ENCODE measurements at regions of chr1 and their contacts with region 1.

Region 1: DNA sequence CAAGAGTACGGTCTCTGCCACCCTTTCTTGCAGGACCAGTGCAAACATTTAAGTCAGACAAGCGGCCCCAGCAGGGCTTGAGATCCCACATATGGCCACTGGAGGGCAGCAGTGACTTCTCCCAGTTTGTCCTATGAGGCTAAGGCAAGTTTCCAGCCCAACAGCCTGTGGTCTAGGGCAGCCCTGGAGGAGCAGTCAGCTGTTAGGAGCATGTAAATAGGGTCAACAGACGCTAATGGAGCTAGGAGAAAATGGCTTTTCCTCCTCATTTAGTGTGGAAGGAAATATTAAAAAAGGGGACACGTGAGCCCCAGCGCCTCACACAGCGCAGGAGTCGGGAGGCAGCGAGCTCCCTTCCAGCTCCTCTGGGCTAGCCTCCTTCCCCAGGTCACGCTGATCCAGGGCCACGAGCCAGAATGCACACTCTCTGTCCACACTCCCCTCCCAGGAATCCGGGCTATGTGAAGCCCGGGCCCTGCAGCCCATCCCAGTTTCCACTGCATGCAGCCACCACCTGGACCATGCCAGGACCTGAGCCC is 95.6 kb downstream of the LAMC2 start:
- DNase-seq: peak; percentile 80 to 93 (median 88)
- H3K4me3 ChIP-seq: peak overlapping the region in 17 of 59 donors; percentile 4 to 41 (median 23)
- H3K27ac ChIP-seq: peak overlapping the region in 13 of 59 donors; percentile 1 to 70 (median 46)
- H3K27me3 ChIP-seq: no peaks in the 10 kb centered on the region
- CTCF ChIP-seq: peak; percentile 75 to 97 (median 92)

Region 2: GRCh38 chr1:182974506-182975191 is 307.0 kb before region 1 on chr1:
- intact Hi-C with region 1: no loop called
- DNase-seq: no peak
- H3K4me3 ChIP-seq: no peak overlapping the region
- H3K27ac ChIP-seq: no peak overlapping the region
- H3K27me3 ChIP-seq: no peaks in the 10 kb centered on the region
- CTCF ChIP-seq: no peak

Region 3: DNA sequence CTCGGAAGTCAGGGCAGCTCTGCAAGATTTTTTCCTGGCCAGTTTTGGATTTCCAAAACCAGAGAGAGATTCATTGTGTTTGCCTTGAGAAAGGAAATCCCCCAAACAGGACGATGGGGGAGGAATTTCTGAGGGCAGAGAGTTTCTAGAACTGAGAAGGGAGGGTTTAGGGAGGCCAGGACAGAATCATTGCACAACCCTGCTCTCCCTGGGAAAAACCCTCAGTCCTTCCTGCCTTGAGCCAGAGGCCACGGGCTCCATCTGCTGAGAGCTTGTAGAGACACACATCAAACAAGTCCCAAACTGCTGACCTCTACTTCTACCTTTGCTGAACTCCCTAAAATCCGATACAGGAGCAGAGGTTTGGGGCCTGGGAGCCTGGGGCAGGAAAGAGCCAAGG is 36.8 kb after region 1 on chr1:
- intact Hi-C with region 1: loop called in 1 of 2 experiments (anchors 2 kb)
- DNase-seq: peak in 1 of 10 donors; percentile 49
- H3K4me3 ChIP-seq: no peak overlapping the region
- H3K27ac ChIP-seq: peak overlapping the region in 10 of 59 donors; percentile 8 to 69 (median 39)
- H3K27me3 ChIP-seq: no peaks in the 10 kb centered on the region
- CTCF ChIP-seq: peak in 30 of 56 donors; percentile 14 to 54 (median 27)

Region 4: DNA sequence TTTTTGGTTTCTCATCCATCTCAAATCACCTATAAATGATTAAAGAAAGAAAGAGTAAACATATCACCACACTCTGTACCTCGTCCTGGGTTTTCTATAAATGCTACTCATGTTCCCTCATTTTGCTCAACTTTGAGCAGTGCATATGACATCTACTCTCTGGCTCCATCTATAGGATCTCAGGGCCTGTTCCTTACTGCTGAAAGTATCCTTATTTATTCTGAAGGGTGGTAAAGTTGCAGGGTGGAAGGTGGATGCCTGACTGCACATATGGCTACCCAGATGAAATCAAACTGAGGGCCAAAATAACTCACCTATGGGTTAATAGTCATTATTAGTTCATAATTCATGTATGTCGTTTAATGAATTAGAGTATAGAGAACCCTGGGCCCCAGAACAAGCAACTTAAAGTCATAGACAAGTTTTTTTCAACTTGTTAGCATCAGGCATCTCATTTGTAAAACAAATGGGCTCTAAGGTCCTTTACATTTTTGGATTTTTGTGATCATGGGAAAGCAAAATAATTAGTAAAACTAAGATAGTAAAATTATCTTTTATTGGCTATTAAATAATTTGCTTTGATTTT is 262.1 kb after region 1 on chr1:
- intact Hi-C with region 1: loop called in 1 of 2 experiments (anchors 10 kb)
- DNase-seq: peak in 1 of 10 donors; percentile 10
- H3K4me3 ChIP-seq: peak overlapping the region in 1 of 59 donors; percentile 6
- H3K27ac ChIP-seq: peak overlapping the region in 13 of 59 donors; percentile 1 to 59 (median 25)
- H3K27me3 ChIP-seq: no peaks in the 10 kb centered on the region
- CTCF ChIP-seq: peak; percentile 47 to 79 (median 66)

Region 5: GRCh38 chr1:183622884-183623785 is 341.5 kb after region 1 on chr1:
- intact Hi-C with region 1: loop called (anchors 5 to 10 kb)
- DNase-seq: peak in 7 of 10 donors; percentile 49 to 76 (median 63)
- H3K4me3 ChIP-seq: no peak overlapping the region
- H3K27ac ChIP-seq: peak overlapping the region in 42 of 59 donors; percentile 1 to 74 (median 52)
- H3K27me3 ChIP-seq: no peaks in the 10 kb centered on the region
- CTCF ChIP-seq: peak; percentile 22 to 86 (median 74)

Measured in dorsolateral prefrontal cortex (tissue), 120 donors.